WTC11 (cell line): ENCODE measurements at regions of chr3 and their contacts with region 1.

Region 1: GRCh38 chr3:14863333-14864100 is 44.8 kb downstream of the FGD5 start:
- DNase-seq: peak; percentile 40
- ATAC-seq: peak; percentile 82
- H3K4me3 Mint-ChIP-seq: no peak overlapping the region
- H3K27ac Mint-ChIP-seq: no peak overlapping the region
- H3K4me1 Mint-ChIP-seq: peaks cover 31% of the 10 kb centered on the region
- H3K27me3 Mint-ChIP-seq: no peaks in the 10 kb centered on the region
- CTCF ChIP-seq: peak; percentile 24; the same call in 1 of the 2 replicates

Region 2: DNA sequence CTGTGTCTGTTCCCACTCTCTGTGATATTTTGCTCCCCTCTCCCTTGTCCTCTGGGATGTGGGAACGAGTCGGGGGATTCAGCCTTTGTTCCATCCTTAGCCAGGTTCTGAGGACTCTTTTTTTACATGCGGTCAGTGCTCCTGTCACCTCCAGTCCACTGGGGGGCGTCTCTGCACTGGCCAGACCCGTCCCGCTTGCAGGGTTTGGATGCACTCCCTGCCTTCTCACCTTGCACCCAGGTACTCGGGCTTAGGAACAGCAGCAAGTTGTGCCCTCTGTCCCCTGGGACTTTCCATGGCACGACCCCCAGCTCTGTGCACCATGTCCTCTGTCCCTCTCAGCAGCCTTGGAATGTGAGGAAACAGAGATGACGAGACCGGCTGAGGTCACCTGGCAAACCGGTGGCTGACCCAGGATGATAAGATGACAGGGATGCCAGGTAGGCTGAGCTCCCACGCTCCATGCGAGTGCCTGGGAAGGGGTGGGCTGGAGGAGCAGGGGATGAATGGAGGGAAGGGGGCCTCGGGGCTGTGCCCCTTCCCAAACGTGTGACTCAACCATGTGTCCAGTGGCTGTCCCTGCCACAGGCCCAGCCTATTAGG is 72.1 kb before region 1 on chr3:
- CTCF ChIA-PET with region 1: interaction called, 21 read pairs
- POLR2A ChIA-PET with region 1: no interaction called
- DNase-seq: peak; percentile 86
- ATAC-seq: peak; percentile 95
- H3K4me3 Mint-ChIP-seq: peak overlapping the region; percentile 57
- H3K27ac Mint-ChIP-seq: no peak overlapping the region
- H3K4me1 Mint-ChIP-seq: peaks cover 8% of the 10 kb centered on the region
- H3K27me3 Mint-ChIP-seq: no peaks in the 10 kb centered on the region
- CTCF ChIP-seq: peak; percentile 82

Region 3: GRCh38 chr3:14847613-14848541 is 15.6 kb before region 1 on chr3:
- CTCF ChIA-PET with region 1: interaction called, 13 read pairs
- POLR2A ChIA-PET with region 1: no interaction called
- DNase-seq: peak; percentile 71
- ATAC-seq: peak; percentile 92
- H3K4me3 Mint-ChIP-seq: peak overlapping the region; percentile 28
- H3K27ac Mint-ChIP-seq: peak overlapping the region; percentile 85
- H3K4me1 Mint-ChIP-seq: peaks cover 62% of the 10 kb centered on the region
- H3K27me3 Mint-ChIP-seq: no peaks in the 10 kb centered on the region
- CTCF ChIP-seq: no peak

Region 4: DNA sequence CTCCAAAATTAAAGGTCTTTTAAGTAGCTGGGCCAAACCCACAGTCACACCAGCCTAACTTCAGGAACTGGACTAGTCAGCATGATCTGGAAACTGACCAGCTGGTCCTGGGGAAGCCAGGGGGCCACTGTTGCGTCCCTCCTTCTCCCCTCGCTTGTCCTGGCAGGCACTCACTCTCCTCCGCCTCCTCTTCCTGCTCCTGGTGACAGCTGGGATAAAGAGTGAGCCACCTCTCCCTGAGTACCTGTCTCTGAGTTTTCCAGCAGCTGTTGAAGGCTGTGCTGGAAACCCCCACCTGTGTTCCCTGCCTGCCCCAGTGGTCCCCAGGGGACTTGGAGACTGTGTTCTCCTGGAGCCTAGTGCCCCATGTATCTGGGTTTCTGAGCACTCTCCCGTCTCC is 11.3 kb after region 1 on chr3:
- CTCF ChIA-PET with region 1: interaction called, 17 read pairs
- POLR2A ChIA-PET with region 1: interaction called, 4 read pairs
- DNase-seq: no peak
- ATAC-seq: no peak
- H3K4me3 Mint-ChIP-seq: no peak overlapping the region
- H3K27ac Mint-ChIP-seq: no peak overlapping the region
- H3K4me1 Mint-ChIP-seq: peaks cover 10% of the 10 kb centered on the region
- H3K27me3 Mint-ChIP-seq: no peaks in the 10 kb centered on the region
- CTCF ChIP-seq: no peak